Left cardiac atrium (tissue), 4 donors: ENCODE measurements at regions of chr1 and their contacts with region 1.

Region 1: DNA sequence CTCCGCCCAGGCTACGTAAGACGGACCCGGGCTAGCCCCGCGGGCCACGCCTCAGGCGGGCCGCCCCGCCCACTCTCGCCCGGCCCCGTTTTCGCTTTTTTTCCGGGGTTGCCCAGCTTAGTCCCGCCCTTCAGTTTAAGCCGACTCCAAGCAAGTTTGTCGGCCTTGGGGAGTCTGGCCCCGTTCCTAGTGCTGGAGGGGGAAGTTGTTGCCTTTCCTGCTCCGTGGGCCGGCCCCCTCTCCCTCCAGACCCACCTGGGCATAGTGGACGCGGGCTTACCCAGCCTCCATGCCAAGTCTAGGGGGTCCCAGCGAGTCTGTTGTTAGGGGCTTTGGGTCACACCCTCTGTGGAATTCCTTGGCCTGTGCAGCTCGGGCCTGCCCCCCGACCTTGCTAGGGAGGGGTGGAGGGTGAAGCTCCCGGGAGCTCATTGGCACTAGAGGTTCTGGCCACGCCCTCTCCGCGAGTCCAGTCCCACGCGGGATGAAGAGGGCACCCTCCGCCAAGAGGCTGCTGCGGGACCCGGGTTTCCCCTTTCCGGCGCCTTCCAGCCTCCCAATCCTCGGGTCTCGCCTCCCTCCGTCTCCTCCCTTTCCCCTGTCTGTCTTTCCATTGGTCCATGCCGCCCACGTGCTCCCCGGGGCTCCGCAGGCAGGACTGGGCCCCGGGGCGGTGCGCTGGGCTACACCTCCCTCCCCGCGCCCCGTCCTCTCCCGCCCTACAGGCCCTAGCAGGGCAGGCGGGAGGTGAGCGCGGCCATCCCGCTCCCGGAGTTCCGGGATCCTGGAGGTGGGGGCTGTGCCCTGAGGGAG is 3.3 kb downstream of the RUSC1 start:
- DNase-seq: peak; percentile 97
- ATAC-seq: peak; percentile 84 to 86

Region 2: GRCh38 chr1:154936555-154937084 is 387.4 kb before region 1 on chr1 and contains the start of gene PMVK:
- intact Hi-C with region 1: no loop called
- DNase-seq: peak; percentile 96
- ATAC-seq: peak; percentile 94 to 97
- total RNA-seq, gene PMVK: 55.9 to 63.7 TPM

Region 3: GRCh38 chr1:155084722-155085503 is 239.1 kb before region 1 on chr1:
- intact Hi-C with region 1: no loop called
- DNase-seq: peak; percentile 96
- ATAC-seq: peak; percentile 92 to 93

Region 4: DNA sequence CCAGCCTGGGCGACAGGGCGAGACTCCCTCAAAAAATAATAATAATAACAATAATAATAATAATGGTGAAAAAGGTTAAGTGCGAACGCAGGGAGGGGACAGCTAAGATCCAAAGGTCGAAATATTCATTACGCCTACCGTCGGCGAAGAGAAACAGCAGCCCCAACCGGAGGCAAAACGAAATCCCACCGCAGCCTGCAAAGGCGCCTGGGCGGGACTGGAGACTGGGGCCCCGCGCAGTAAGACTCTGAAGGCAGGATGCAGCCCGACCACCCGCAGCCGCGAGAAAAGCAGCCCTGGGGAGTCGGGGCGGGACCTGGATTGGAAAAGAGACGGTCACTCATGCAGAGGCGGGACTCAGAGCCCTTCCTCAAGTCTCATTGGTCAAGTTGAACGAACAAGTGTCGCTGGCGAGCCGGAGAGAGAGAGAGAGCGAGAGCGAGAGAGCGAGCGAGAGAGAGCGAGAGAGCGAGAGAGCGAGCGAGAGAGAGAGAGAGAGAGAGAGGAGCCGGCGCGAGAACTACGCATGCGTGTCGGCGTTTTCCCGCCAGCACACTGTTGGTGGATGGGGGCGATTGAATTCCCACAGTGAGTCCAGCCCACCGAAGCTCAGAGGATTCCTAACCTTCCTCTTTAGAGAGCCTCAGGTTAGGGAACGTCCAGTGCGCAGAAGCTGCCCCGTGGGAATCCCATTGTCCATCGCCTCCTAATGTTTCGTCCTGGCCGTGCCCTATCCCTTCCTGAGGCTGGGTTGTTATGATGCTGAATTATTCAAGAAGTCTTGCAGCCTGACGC is 79.4 kb before region 1 on chr1:
- intact Hi-C with region 1: loop called in 1 of 2 experiments (anchors 1 kb)
- DNase-seq: peak; percentile 98
- ATAC-seq: peak; percentile 95 to 96

Region 5: GRCh38 chr1:155250633-155251449 is 73.2 kb before region 1 on chr1:
- intact Hi-C with region 1: loop called in 1 of 2 experiments (anchors 5 kb)
- DNase-seq: peak; percentile 95
- ATAC-seq: peak; percentile 80 to 87

Region 6: GRCh38 chr1:155277070-155277895 is 46.7 kb before region 1 on chr1 and contains the start of gene HCN3:
- intact Hi-C with region 1: loop called (anchors 2 to 5 kb)
- DNase-seq: peak; percentile 99
- ATAC-seq: peak; percentile 88 to 89
- total RNA-seq, gene HCN3: 0.76 to 1.6 TPM

Region 7: DNA sequence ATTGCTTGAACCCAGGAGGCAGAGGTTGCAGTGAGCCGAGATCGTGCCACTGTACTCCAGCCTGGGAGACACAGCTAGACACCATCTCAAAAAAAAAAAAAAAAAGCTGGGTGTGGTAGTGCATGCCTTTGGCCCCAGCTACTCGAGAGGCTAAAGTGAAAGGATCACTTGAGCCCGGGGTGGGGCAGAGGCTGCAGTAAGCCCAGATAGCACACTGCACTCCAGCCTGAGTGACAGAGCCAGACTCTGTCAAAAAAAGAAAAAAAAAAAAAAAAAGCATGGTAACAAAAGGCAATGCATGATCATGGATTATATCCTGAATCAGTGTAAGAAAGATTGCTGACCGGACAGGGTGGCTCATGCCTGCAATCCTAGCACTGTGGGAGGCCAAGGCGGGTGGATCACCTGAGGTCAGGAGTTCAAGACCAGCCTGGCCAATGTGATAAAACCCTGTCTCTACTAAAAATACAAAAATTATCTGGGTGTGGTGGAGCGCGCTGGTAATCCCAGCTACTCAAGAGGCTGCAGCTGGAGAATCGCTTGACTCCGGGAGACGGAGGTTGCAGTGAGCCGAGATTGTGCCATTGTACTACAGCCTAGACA is 73.0 kb after region 1 on chr1:
- intact Hi-C with region 1: no loop called
- DNase-seq: peak; percentile 48
- ATAC-seq: peak in 1 of 2 donors; percentile 73

Region 8: GRCh38 chr1:155681776-155682175 is 357.8 kb after region 1 on chr1:
- intact Hi-C with region 1: no loop called
- DNase-seq: no peak
- ATAC-seq: no peak